Aorta (tissue), 5 donors: ENCODE measurements at regions of chr11 and their contacts with region 1.

Region 1: GRCh38 chr11:93741094-93741881 is at the starts of genes C11orf54 and TAF1D:
- DNase-seq: peak; percentile 98 to 99
- ATAC-seq: peak; percentile 98
- H3K4me3 ChIP-seq: peak within 1 kb of the TSS; percentile 69 to 72
- H3K27ac ChIP-seq: peak within 1 kb of the TSS; percentile 50 to 91
- H3K4me1 ChIP-seq: no peaks in the 10 kb centered on the region
- H3K27me3 ChIP-seq: no peaks in the 10 kb centered on the region
- total RNA-seq, gene C11orf54: 26.3 to 31.2 TPM
- total RNA-seq, gene TAF1D: 110 to 111 TPM

Region 2: GRCh38 chr11:93662177-93662575 is 79.1 kb before region 1 on chr11:
- intact Hi-C with region 1: loop called in 1 of 2 experiments (anchors 5 kb)
- DNase-seq: no peak
- ATAC-seq: no peak
- H3K4me3 ChIP-seq: peak overlapping the region; percentile 69 to 96
- H3K27ac ChIP-seq: peak overlapping the region in 1 of 2 donors; percentile 9
- H3K4me1 ChIP-seq: peaks cover 1 to 4% of the 10 kb centered on the region in 2 donors
- H3K27me3 ChIP-seq: no peaks in the 10 kb centered on the region